SK-N-SH (cell line): ENCODE measurements at regions of chr2 and their contacts with region 1.

Region 1: DNA sequence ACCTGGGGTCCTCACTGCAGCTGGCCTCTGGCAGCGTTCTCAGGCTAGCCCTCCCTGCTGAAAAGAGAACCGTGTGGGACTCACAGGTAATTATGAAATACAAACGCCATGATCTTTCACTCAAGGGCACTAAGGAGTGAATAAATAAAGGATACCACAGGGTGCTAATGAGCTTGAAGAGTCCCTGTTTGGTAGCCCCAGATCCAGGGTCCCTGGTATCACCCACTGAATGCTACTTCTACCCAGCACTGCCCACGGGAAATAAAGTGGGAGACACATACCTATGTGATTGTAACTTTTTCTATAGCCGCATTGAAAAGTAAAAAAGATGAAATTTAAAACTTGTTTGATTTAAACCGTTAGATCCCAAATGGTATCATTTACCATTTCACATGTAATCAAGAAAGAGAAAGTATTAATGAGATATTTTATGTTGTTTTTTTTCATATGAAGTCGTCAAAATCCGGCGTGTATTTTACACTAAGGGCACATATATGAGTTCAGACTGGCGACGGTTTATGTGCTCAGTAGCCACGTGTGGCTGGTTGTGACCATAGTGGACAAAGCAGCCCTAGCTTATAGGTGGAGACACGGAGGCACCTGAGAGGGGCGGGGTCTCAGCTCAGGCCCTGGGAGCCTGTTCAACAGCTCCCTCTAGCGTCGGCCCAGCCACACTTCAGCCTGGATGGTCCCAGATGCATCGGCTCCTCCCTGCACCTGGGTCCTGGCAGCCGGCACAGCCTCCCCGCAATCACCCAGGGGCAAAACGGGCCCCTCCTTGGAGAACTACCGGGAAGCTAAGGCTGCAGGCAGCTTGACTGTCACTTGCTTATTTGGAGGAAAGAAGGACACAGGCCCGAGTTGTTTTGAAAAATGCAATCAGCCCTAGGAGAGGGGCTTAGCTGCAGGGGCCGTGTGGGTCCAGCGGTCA is 39.2 kb downstream of the ODC1 start:
- DNase-seq: peak; percentile 97
- H3K4me3 ChIP-seq: peak overlapping the region in 1 of 2 experiments; percentile 26; a peak in 1 of 4 replicates
- H3K27ac ChIP-seq: peak overlapping the region in 1 of 2 experiments; percentile 62; a peak in 2 of 4 replicates
- H3K4me1 ChIP-seq: peaks cover 34 to 55% of the 10 kb centered on the region in 2 experiments
- H3K27me3 ChIP-seq: no peaks in the 10 kb centered on the region
- CTCF ChIP-seq: peak; percentile 99
- EP300 ChIP-seq: no peak
- RAD21 ChIP-seq: peak; percentile 99

Region 2: DNA sequence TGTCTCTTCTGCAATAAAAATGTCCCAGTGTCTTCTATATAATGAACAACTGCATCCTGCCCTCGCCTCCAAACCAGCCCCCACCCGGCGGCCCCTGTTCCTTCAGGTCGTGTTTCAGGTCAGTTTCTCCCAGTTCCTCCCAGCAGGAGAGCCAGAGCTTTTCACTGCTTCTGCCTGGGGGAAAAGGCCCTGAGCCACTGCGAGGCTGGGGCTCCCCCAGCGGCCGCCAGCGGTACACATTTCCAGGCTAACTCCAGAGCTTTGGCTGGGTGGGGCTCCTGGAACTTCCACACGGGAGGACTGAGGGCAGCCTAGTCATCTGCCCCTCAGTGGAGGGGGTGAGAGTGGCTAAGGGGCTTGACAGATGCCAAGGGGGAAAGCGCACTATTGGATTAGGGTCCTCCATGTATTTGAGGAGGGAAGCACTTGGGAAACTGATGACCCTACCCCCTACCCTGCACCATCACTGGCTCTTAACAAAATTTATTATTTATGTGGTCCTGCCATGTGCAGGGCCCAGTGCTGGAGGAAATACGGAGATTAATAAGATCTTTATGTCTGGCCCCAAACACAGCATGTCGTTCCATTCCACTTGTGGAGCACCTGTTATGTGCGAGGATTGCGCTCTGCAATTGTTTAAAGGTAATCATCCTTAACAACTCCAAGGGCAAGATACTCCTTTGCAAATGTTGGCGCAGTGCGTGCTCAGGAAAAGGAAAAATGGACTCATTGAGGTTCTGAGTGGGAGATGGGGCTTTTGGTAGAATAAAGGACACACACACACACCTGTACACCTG is 311.4 kb before region 1 on chr2:
- CTCF ChIA-PET with region 1: interaction called, 15 read pairs
- POLR2A ChIA-PET with region 1: no interaction called
- DNase-seq: peak; percentile 91
- H3K4me3 ChIP-seq: no peak overlapping the region
- H3K27ac ChIP-seq: no peak overlapping the region
- H3K4me1 ChIP-seq: peaks cover 0 to 13% of the 10 kb centered on the region in 2 experiments; a peak in 1 of 4 replicates
- H3K27me3 ChIP-seq: no peaks in the 10 kb centered on the region
- CTCF ChIP-seq: peak; percentile 96
- EP300 ChIP-seq: no peak
- RAD21 ChIP-seq: peak; percentile 83

Region 3: DNA sequence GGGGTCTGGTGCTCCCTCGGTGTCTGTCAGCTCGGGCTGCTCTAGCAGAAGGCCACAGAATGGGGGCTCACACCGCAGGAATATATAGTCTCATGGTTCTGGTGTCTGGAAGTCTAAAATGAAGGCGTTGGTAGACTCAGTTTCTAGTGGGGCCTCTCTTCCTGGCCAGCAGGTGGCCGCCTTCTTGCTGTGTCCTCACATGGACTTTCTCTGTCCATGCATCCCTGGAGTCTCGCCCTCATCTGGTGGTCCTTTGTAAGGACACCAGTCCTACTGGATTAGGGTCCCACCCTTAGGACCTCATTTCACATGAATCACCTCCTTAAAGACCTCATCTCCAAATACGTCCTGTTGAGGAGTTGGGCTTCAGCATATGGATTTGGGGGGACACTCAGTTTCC is 220.7 kb before region 1 on chr2:
- CTCF ChIA-PET with region 1: interaction called, 12 read pairs
- POLR2A ChIA-PET with region 1: no interaction called
- DNase-seq: peak; percentile 72
- H3K4me3 ChIP-seq: no peak overlapping the region
- H3K27ac ChIP-seq: no peak overlapping the region
- H3K4me1 ChIP-seq: peaks cover 0 to 8% of the 10 kb centered on the region in 2 experiments; a peak in 1 of 4 replicates
- H3K27me3 ChIP-seq: no peaks in the 10 kb centered on the region
- CTCF ChIP-seq: peak; percentile 51
- EP300 ChIP-seq: no peak
- RAD21 ChIP-seq: peak; percentile 55

Region 4: GRCh38 chr2:10285556-10286198 is 123.2 kb before region 1 on chr2:
- CTCF ChIA-PET with region 1: interaction called, 34 read pairs
- POLR2A ChIA-PET with region 1: interaction called, 13 read pairs
- DNase-seq: peak; percentile 95
- H3K4me3 ChIP-seq: no peak overlapping the region
- H3K27ac ChIP-seq: peak overlapping the region; percentile 69 to 96
- H3K4me1 ChIP-seq: peaks cover 43 to 52% of the 10 kb centered on the region in 2 experiments
- H3K27me3 ChIP-seq: no peaks in the 10 kb centered on the region
- CTCF ChIP-seq: peak; percentile 17
- EP300 ChIP-seq: peak in 1 of 2 experiments; percentile 81; a peak in 1 of 4 replicates
- RAD21 ChIP-seq: no peak; the same call in none of the 2 replicates

Region 5: GRCh38 chr2:10342245-10342951 is 66.5 kb before region 1 on chr2:
- CTCF ChIA-PET with region 1: interaction called, 11 read pairs
- POLR2A ChIA-PET with region 1: no interaction called
- DNase-seq: no peak
- H3K4me3 ChIP-seq: no peak overlapping the region
- H3K27ac ChIP-seq: peak overlapping the region in 1 of 2 experiments; percentile 67; a peak in 2 of 4 replicates
- H3K4me1 ChIP-seq: peaks cover 8 to 73% of the 10 kb centered on the region in 2 experiments; a peak in 3 of 4 replicates
- H3K27me3 ChIP-seq: no peaks in the 10 kb centered on the region
- CTCF ChIP-seq: no peak
- EP300 ChIP-seq: no peak
- RAD21 ChIP-seq: no peak

Region 6: GRCh38 chr2:10389573-10389972 is 19.3 kb before region 1 on chr2:
- CTCF ChIA-PET with region 1: interaction called, 53 read pairs
- POLR2A ChIA-PET with region 1: interaction called, 5 read pairs
- DNase-seq: no peak
- H3K4me3 ChIP-seq: no peak overlapping the region
- H3K27ac ChIP-seq: peak overlapping the region in 1 of 2 experiments; percentile 96; a peak in 2 of 4 replicates
- H3K4me1 ChIP-seq: peaks cover 10 to 94% of the 10 kb centered on the region in 2 experiments; a peak in 3 of 4 replicates
- H3K27me3 ChIP-seq: no peaks in the 10 kb centered on the region
- CTCF ChIP-seq: no peak
- EP300 ChIP-seq: no peak
- RAD21 ChIP-seq: no peak

Region 7: GRCh38 chr2:10517351-10518043 is 108.6 kb after region 1 on chr2:
- CTCF ChIA-PET with region 1: no interaction called
- POLR2A ChIA-PET with region 1: no interaction called
- DNase-seq: no peak
- H3K4me3 ChIP-seq: no peak overlapping the region
- H3K27ac ChIP-seq: no peak overlapping the region
- H3K4me1 ChIP-seq: no peaks in the 10 kb centered on the region
- H3K27me3 ChIP-seq: no peaks in the 10 kb centered on the region
- CTCF ChIP-seq: no peak
- EP300 ChIP-seq: no peak
- RAD21 ChIP-seq: no peak

Region 8: DNA sequence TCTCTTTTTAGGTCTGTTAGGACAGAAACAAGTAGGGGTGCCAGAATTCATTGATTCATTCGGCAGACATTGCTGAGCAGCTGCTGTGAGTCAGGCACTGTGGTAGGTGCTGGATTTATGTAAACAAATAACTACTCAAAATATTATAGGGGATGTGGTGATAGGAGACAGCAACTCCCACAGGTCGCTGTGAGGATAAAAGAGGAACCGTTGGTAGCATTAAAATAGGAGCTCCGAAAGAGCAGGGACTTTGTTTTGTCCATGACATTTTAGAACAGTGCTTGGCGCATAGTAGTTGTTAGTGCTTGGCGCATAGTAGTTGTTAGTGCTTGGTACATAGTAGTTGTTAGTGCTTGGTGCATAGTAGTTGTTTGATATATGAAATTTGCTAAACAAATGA is 341.7 kb after region 1 on chr2:
- CTCF ChIA-PET with region 1: no interaction called
- POLR2A ChIA-PET with region 1: no interaction called
- DNase-seq: no peak
- H3K4me3 ChIP-seq: no peak overlapping the region
- H3K27ac ChIP-seq: no peak overlapping the region
- H3K4me1 ChIP-seq: no peaks in the 10 kb centered on the region
- H3K27me3 ChIP-seq: no peaks in the 10 kb centered on the region; the same call in 1 of the 2 replicates
- CTCF ChIP-seq: no peak
- EP300 ChIP-seq: no peak
- RAD21 ChIP-seq: no peak